ENCODE measurements at regions of chr12 and their contacts with region 1.

Region 1: GRCh38 chr12:58443273-58443980 is 476.9 kb downstream of the LRIG3 start:
- DNase-seq: no peak
- H3K4me3 Mint-ChIP-seq: no peak overlapping the region
- H3K27ac Mint-ChIP-seq: no peak overlapping the region
- H3K4me1 Mint-ChIP-seq: peaks cover 2% of the 10 kb centered on the region
- H3K27me3 Mint-ChIP-seq: peaks cover 11% of the 10 kb centered on the region

Region 2: GRCh38 chr12:57983146-57983857 is 460.1 kb before region 1 on chr12:
- intact Hi-C with region 1: loop called (anchors 10 kb)
- DNase-seq: no peak
- H3K4me3 Mint-ChIP-seq: no peak overlapping the region
- H3K27ac Mint-ChIP-seq: no peak overlapping the region
- H3K4me1 Mint-ChIP-seq: no peaks in the 10 kb centered on the region
- H3K27me3 Mint-ChIP-seq: peaks cover 5% of the 10 kb centered on the region

Region 3: DNA sequence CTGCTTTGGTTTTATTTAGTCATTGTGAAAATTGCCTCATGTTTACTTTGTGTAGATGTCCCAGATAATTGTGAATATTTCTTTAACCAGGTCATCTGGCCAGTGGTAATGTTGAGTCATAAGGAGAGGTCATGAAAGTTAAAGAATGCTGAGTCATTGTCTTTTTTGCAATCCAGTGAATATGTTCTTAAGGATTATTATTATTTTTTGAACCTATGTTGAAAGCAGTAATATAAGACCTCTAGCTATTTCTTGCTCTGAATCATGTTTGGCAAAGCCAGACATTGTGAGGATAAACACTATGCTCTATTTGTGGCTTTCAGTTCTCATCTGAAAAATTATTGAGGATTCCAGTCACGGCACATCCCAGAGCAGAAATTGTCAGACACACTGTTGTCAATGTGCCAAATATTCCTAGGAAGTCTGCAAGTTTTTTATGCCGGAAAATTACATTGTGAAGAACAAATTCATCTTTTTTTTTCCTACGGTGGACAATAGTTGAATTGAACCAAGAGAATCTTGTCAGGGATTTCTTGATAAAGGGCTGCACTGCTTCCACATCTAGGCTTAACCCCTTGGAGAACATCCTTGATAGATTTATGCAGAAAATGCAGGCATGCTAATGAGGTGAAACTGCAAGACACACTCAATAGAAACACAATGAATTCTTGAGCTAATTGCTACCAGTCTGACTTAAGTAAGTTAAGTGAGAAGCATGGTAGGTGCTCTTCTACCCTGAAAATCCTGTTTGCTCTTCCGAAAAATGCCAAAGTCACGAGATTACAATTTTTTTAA is 132.4 kb before region 1 on chr12:
- intact Hi-C with region 1: no loop called
- DNase-seq: no peak
- H3K4me3 Mint-ChIP-seq: no peak overlapping the region
- H3K27ac Mint-ChIP-seq: no peak overlapping the region
- H3K4me1 Mint-ChIP-seq: no peaks in the 10 kb centered on the region
- H3K27me3 Mint-ChIP-seq: no peaks in the 10 kb centered on the region

Region 4: DNA sequence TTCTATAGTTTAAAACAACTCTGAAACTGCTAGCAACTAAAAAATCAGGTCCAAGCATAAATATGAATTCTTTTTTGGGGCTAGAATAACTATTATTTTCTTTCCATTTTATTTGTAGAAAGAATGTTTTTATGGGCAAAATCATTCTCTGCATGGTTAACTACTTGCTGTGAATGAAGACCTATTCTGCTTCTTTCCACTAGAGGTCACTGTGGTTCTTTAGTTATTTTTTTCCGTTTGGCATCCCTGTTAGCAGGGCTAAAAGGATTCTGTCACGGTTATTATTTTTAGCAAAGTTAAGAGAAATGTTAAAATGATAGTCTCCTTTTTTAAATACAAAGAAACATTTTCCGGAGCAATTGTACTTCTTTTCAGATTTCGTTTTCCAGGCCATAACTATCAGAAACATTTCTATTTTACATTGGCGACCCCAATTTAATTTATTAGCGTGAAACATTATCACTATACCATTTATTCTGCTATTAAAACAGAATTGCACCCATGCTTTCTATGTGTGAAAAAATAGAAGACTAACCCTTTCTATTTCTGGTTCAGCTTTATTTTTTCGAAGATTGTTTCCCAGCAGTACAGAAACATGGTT is 97.3 kb before region 1 on chr12:
- intact Hi-C with region 1: loop called (anchors 1 kb)
- DNase-seq: no peak
- H3K4me3 Mint-ChIP-seq: no peak overlapping the region
- H3K27ac Mint-ChIP-seq: no peak overlapping the region
- H3K4me1 Mint-ChIP-seq: no peaks in the 10 kb centered on the region
- H3K27me3 Mint-ChIP-seq: peaks cover 1% of the 10 kb centered on the region